Activated CD8-positive, alpha-beta T cell treated with anti-CD3 and anti-CD28 coated beads for 36 hours (primary cell): ENCODE measurements at regions of chr19 and their contacts with region 1.

Region 1: DNA sequence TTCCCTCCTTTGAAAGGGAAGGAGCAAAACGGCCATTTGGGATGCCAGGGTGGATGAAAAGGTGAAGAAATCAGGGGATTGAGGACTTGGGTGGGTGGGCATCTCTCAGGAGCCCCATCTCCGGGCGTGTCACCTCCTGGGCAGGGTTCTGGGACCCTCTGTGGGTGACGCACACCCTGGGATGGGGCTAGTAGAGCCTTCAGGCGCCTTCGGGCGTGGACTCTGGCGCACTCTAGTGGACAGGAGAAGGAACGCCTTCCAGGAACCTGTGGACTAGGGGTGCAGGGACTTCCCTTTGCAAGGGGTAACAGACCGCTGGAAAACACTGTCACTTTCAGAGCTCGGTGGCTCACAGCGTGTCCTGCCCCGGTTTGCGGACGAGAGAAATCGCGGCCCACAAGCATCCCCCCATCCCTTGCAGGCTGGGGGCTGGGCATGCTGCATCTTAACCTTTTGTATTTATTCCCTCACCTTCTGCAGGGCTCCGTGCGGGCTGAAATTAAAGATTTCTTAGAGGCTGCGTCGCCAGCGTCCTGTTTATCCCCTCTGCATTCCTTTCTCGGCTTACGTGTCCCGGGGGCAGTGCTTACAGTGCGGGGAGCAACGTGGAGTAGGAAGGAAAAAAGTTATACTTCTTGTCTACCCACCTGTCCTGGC is 15.2 kb upstream of the S1PR4 start:
- DNase-seq: peak; percentile 74
- ATAC-seq: peak; percentile 88
- H3K4me3 Mint-ChIP-seq: no peak overlapping the region
- H3K27ac Mint-ChIP-seq: no peak overlapping the region
- H3K4me1 Mint-ChIP-seq: peaks cover 18% of the 10 kb centered on the region
- H3K27me3 Mint-ChIP-seq: no peaks in the 10 kb centered on the region
- CTCF ChIP-seq: peak; percentile 97

Region 2: DNA sequence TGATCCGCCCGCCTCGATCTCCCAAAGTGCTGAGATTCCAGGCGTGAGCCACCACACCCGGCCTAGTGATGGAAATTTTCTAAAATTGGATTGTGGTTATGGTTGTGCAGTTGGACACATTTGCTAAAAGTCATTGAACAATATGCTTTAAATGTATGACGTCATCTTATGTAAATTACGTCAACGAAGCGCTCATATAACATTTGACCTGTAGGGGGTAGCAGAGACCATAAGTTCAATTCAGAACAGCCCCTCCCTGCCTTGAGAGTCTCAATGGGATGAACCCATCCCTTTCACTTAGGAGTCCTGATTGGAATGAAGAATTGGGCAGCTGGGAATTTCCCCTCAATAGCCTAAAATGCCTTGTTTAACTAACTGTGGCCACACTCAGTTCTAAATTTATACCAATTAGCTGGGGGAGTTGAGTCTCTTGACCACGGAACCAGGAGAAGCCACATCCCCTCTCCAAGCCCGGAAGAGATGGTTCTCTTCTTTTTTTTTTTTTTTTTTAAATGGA is 201.3 kb before region 1 on chr19:
- CTCF ChIA-PET with region 1: interaction called, 10 read pairs
- POLR2A ChIA-PET with region 1: no interaction called
- intact Hi-C with region 1: no loop called
- DNase-seq: peak; percentile 65
- ATAC-seq: peak; percentile 84
- H3K4me3 Mint-ChIP-seq: no peak overlapping the region
- H3K27ac Mint-ChIP-seq: no peak overlapping the region
- H3K4me1 Mint-ChIP-seq: peaks cover 3% of the 10 kb centered on the region
- H3K27me3 Mint-ChIP-seq: no peaks in the 10 kb centered on the region
- CTCF ChIP-seq: peak; percentile 81

Region 3: GRCh38 chr19:3125900-3126524 is 37.3 kb before region 1 on chr19:
- CTCF ChIA-PET with region 1: interaction called, 137 read pairs
- POLR2A ChIA-PET with region 1: no interaction called
- intact Hi-C with region 1: loop called (anchors 5 kb)
- DNase-seq: peak; percentile 76
- ATAC-seq: peak; percentile 99
- H3K4me3 Mint-ChIP-seq: no peak overlapping the region
- H3K27ac Mint-ChIP-seq: no peak overlapping the region
- H3K4me1 Mint-ChIP-seq: peaks cover 7% of the 10 kb centered on the region
- H3K27me3 Mint-ChIP-seq: no peaks in the 10 kb centered on the region
- CTCF ChIP-seq: peak; percentile 83

Region 4: GRCh38 chr19:3146677-3147100 is 16.7 kb before region 1 on chr19:
- CTCF ChIA-PET with region 1: interaction called, 16 read pairs
- POLR2A ChIA-PET with region 1: no interaction called
- intact Hi-C with region 1: no loop called
- DNase-seq: peak; percentile 73
- ATAC-seq: peak; percentile 61
- H3K4me3 Mint-ChIP-seq: no peak overlapping the region
- H3K27ac Mint-ChIP-seq: no peak overlapping the region
- H3K4me1 Mint-ChIP-seq: peaks cover 19% of the 10 kb centered on the region
- H3K27me3 Mint-ChIP-seq: no peaks in the 10 kb centered on the region
- CTCF ChIP-seq: peak; percentile 98

Region 5: GRCh38 chr19:3207466-3208242 is 44.3 kb after region 1 on chr19:
- CTCF ChIA-PET with region 1: no interaction called
- POLR2A ChIA-PET with region 1: no interaction called
- intact Hi-C with region 1: no loop called
- DNase-seq: no peak
- ATAC-seq: no peak
- H3K4me3 Mint-ChIP-seq: no peak overlapping the region
- H3K27ac Mint-ChIP-seq: no peak overlapping the region
- H3K4me1 Mint-ChIP-seq: no peaks in the 10 kb centered on the region
- H3K27me3 Mint-ChIP-seq: no peaks in the 10 kb centered on the region
- CTCF ChIP-seq: no peak